Dendritic cell treated with granulocyte-macrophage colony-stimulating factor and Interleukin-4, amounts not matched to agents 40 ng/mL and 50 ng/mL, for 4 days (primary cell): ENCODE measurements at regions of chr13 and their contacts with region 1.

Region 1: DNA sequence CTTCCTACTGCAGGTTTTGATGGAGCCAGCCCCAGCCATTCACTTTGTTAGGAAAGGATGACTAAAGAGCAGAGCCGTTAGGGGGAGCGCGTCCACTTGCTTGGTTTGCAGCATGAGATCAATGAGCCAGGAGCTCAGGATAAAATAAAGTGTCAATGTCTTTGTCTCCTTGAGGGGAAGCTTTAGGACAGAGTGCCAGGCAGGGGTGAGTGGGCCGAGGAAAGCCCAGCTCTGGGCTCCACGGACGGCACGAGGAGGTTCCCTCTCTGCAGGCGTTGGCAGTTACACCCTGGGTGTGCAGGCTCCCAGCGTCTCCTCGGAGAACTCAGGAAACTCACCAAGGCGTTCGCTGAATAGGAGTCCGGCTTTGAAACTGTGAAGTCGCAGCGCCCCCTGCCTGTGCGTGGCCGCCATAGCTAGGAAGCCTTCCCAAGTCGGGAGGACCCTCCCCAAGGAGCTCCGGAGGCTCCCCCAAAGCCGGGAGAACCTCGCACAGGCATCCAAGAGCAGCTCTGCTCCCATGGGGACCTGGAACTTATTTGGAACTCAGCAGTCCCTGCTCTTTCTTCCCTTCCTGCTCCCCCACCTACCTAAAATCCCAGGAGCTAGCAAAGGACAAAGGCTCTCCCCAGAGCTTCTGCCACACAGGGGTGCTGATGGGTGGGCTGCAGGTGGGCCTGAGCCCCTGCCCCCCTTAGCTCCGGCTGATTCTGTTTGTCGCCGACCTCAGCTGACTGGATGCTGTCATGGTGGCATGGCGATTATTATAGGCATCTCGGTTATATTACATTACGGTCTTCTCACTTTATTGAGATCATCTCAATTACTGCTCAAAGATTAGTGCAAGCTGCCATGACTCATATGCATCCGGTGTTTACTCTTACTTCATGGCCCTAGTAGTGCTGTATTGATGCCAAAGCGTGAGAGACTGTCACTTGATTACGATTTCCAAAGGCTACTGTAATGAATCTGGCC is 34.4 kb downstream of the GSX1 start:
- H3K4me3 Mint-ChIP-seq: peak overlapping the region; percentile 47
- H3K27ac Mint-ChIP-seq: no peak overlapping the region
- H3K4me1 Mint-ChIP-seq: peaks cover 17% of the 10 kb centered on the region
- H3K27me3 Mint-ChIP-seq: peaks cover 91% of the 10 kb centered on the region

Region 2: GRCh38 chr13:26985285-26985878 is 841.3 kb before region 1 on chr13:
- intact Hi-C with region 1: loop called (anchors 1 kb)
- H3K4me3 Mint-ChIP-seq: no peak overlapping the region
- H3K27ac Mint-ChIP-seq: no peak overlapping the region
- H3K4me1 Mint-ChIP-seq: peaks cover 16% of the 10 kb centered on the region
- H3K27me3 Mint-ChIP-seq: no peaks in the 10 kb centered on the region

Region 3: GRCh38 chr13:27374650-27375049 is 452.0 kb before region 1 on chr13:
- intact Hi-C with region 1: loop called (anchors 1 kb)
- H3K4me3 Mint-ChIP-seq: no peak overlapping the region
- H3K27ac Mint-ChIP-seq: no peak overlapping the region
- H3K4me1 Mint-ChIP-seq: no peaks in the 10 kb centered on the region
- H3K27me3 Mint-ChIP-seq: peaks cover 9% of the 10 kb centered on the region

Region 4: GRCh38 chr13:27556109-27556508 is 270.6 kb before region 1 on chr13:
- intact Hi-C with region 1: loop called (anchors 1 kb)
- H3K4me3 Mint-ChIP-seq: no peak overlapping the region
- H3K27ac Mint-ChIP-seq: no peak overlapping the region
- H3K4me1 Mint-ChIP-seq: peaks cover 12% of the 10 kb centered on the region
- H3K27me3 Mint-ChIP-seq: no peaks in the 10 kb centered on the region

Region 5: GRCh38 chr13:27868641-27869435 is 42.2 kb after region 1 on chr13:
- intact Hi-C with region 1: no loop called
- H3K4me3 Mint-ChIP-seq: no peak overlapping the region
- H3K27ac Mint-ChIP-seq: no peak overlapping the region
- H3K4me1 Mint-ChIP-seq: no peaks in the 10 kb centered on the region
- H3K27me3 Mint-ChIP-seq: peaks cover 34% of the 10 kb centered on the region

Region 6: DNA sequence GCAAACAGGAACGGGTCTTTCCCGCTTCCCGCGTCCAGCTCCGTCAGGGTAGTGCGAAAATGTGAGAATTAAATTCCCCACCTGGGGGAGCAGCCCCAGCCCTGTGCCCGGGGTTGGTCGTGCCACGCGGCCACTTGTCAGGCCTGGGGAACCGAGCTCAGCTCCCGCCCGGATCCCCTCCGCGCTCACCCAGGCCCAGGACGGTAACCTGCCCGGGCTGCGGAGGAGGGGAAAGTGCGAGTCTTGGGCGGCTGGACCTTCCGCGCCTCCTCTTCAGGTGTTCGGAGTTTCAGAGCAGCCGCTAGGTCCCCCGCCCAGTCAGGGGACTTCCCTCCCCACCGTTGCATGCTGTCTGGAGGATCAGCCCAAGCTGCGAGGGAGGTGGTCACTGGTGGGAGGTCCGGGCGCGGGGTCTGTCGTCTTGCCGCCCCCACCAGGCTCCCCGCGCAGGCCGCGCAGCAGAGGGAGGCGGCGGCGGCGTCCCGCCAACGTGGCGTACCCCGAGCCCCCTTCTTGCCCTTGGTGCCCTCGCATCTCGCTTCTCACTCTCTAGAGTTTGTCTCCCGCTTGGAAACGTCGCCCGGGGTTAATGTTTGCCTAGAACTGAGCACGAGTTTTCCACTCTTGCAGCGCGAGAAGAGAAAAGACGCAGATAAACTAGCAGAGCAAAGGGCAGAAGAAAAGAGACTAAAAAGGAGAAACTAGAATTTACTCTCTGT is 153.8 kb after region 1 on chr13:
- intact Hi-C with region 1: loop called (anchors 1 kb)
- H3K4me3 Mint-ChIP-seq: no peak overlapping the region
- H3K27ac Mint-ChIP-seq: no peak overlapping the region
- H3K4me1 Mint-ChIP-seq: peaks cover 23% of the 10 kb centered on the region
- H3K27me3 Mint-ChIP-seq: peaks cover 83% of the 10 kb centered on the region